Gastrocnemius medialis (tissue), 4 donors: ENCODE measurements at regions of chr15 and their contacts with region 1.

Region 1: DNA sequence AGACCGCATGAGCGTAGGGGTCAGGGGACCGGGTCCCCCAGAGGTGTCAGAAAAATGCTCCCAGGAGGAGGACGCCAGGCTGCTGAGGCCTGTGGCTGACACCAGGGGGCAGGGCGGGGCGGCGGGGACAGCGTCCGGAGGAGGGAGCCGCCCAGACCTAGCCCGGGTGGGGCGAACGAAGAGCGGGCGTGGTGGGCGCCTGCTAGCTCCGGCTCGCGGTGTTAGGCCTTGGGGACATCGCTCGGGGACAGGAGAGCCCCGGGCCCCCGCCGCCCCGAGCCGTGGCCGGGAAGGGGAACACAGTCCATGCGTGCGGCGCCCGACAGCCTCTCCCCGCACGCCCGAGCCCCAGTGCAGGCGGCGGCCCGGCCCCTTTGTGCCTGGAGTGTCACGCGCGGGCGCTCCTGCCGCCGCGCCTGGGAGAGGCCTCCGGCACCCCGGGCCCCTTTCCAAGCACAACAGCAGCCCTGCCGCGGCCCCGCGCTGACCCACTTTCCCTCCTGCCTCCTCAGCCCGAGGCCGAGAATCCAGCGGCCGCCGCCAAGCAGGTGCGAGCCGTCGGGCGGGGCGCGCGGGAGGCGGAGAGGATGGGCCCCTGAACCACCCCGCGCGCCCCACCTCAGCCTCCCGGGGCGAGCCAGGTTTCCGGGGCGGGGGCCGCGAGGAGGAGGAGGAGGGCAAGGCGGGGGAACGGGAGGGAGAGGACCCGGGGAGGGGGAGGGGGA is 111.0 kb upstream of the KLF13 start:
- DNase-seq: peak; percentile 82 to 83
- ATAC-seq: peak; percentile 71 to 74
- H3K4me3 ChIP-seq: peak overlapping the region; percentile 55 to 67 (median 59)
- H3K27ac ChIP-seq: peak overlapping the region; percentile 83 to 94 (median 92)
- H3K4me1 ChIP-seq: peaks cover 12 to 20% of the 10 kb centered on the region in 2 donors
- H3K27me3 ChIP-seq: no peaks in the 10 kb centered on the region
- CTCF ChIP-seq: peak; percentile 88 to 95 (median 90)
- POLR2A ChIP-seq: peak; percentile 61 to 69

Region 2: GRCh38 chr15:30962079-30962478 is 253.6 kb before region 1 on chr15:
- in situ Hi-C with region 1: no loop called
- intact Hi-C with region 1: loop called (anchors 10 kb)
- DNase-seq: peak; percentile 70 to 92
- ATAC-seq: peak; percentile 84 to 87
- H3K4me3 ChIP-seq: peak overlapping the region in 1 of 4 donors; percentile 14
- H3K27ac ChIP-seq: peak overlapping the region; percentile 84 to 95 (median 90)
- H3K4me1 ChIP-seq: peaks cover 36 to 39% of the 10 kb centered on the region in 2 donors
- H3K27me3 ChIP-seq: no peaks in the 10 kb centered on the region
- CTCF ChIP-seq: no peak
- POLR2A ChIP-seq: peak in 1 of 2 donors; percentile 19

Region 3: GRCh38 chr15:31261266-31262142 is 45.9 kb after region 1 on chr15:
- in situ Hi-C with region 1: no loop called
- intact Hi-C with region 1: loop called (anchors 2 kb)
- DNase-seq: no peak
- ATAC-seq: no peak
- H3K4me3 ChIP-seq: no peak overlapping the region
- H3K27ac ChIP-seq: no peak overlapping the region
- H3K4me1 ChIP-seq: peaks cover 5 to 15% of the 10 kb centered on the region in 2 donors
- H3K27me3 ChIP-seq: no peaks in the 10 kb centered on the region
- CTCF ChIP-seq: no peak
- POLR2A ChIP-seq: no peak

Region 4: DNA sequence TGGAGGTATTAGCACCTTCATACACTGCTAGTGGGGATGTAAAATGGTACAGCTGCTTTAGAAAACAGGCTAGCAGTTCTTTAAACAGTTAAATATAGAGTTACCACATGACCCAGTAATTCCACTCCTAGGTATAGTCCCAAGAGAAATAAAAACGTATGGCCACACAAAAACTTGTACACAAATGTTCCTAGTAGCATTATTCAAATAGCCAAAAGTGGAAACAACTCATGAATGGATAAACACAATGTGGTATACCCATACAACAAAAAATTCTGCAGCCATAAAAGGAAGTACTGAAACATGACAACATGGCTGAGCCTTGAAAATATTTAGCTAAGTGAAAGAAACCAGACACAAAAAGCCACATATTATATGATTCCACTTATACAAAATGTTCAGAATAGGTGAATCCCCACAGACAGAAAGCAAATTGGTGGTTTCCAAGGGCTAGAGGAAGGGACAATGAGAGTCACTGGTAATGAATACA is 70.2 kb after region 1 on chr15:
- in situ Hi-C with region 1: no loop called
- intact Hi-C with region 1: no loop called
- DNase-seq: no peak
- ATAC-seq: no peak
- H3K4me3 ChIP-seq: no peak overlapping the region
- H3K27ac ChIP-seq: no peak overlapping the region
- H3K4me1 ChIP-seq: no peaks in the 10 kb centered on the region
- H3K27me3 ChIP-seq: no peaks in the 10 kb centered on the region
- CTCF ChIP-seq: no peak
- POLR2A ChIP-seq: no peak

Region 5: GRCh38 chr15:31391687-31392671 is 176.3 kb after region 1 on chr15:
- in situ Hi-C with region 1: loop called in 1 of 4 experiments (anchors 10 kb)
- intact Hi-C with region 1: loop called (anchors 1 kb)
- DNase-seq: peak; percentile 76 to 87
- ATAC-seq: peak; percentile 50 to 59
- H3K4me3 ChIP-seq: peak overlapping the region; percentile 61 to 84 (median 73)
- H3K27ac ChIP-seq: peak overlapping the region; percentile 85 to 96 (median 91)
- H3K4me1 ChIP-seq: peaks cover 30 to 51% of the 10 kb centered on the region in 2 donors
- H3K27me3 ChIP-seq: no peaks in the 10 kb centered on the region
- CTCF ChIP-seq: peak in 1 of 5 experiments; percentile 16
- POLR2A ChIP-seq: peak; percentile 94 to 96

Region 6: GRCh38 chr15:31435261-31435911 is 219.7 kb after region 1 on chr15:
- in situ Hi-C with region 1: loop called in 3 of 4 experiments (anchors 10 to 25 kb)
- intact Hi-C with region 1: loop called (anchors 1 kb)
- DNase-seq: peak; percentile 59 to 81
- ATAC-seq: peak; percentile 77 to 90
- H3K4me3 ChIP-seq: peak overlapping the region in 3 of 4 donors; percentile 3 to 23 (median 7)
- H3K27ac ChIP-seq: peak overlapping the region; percentile 58 to 69 (median 64)
- H3K4me1 ChIP-seq: peaks cover 13 to 14% of the 10 kb centered on the region in 2 donors
- H3K27me3 ChIP-seq: no peaks in the 10 kb centered on the region
- CTCF ChIP-seq: peak; percentile 60 to 80 (median 68)
- POLR2A ChIP-seq: no peak